ENCODE measurements at regions of chr4 and their contacts with region 1.

Region 1: DNA sequence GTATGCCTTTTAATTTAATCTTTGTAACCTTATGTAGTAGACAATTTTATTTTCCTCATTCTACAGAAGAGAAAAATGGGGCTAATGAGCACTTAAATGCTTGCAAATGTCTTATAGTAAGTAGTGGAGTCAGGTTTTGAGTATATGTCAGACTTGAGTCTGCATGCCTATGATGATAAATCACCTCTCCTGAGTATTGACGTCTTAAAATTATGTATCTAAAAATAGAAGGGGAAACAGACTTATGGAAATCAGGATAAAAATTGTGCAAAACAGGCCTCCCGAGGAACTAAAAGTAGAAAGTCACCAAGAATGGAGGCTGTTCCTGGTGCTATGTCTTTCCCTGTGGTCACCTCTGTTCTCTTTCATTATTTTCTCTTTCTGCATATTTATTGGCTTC is 92.7 kb downstream of the STIM2 start:
- DNase-seq: no peak
- ATAC-seq: no peak
- H3K4me3 ChIP-seq: no peak overlapping the region
- H3K4me3 Mint-ChIP-seq: peak overlapping the region in 3 of 10 donors; percentile 5 to 63 (median 32)
- H3K27ac ChIP-seq: no peak overlapping the region
- H3K27ac Mint-ChIP-seq: peak overlapping the region in 1 of 9 donors; percentile 9
- H3K4me1 ChIP-seq: peaks cover 0 to 6% of the 10 kb centered on the region in 2 donors
- H3K4me1 Mint-ChIP-seq: peaks cover 9 to 75% (median 57%) of the 10 kb centered on the region in 7 donors
- H3K27me3 ChIP-seq: no peaks in the 10 kb centered on the region
- H3K27me3 Mint-ChIP-seq: no peaks in the 10 kb centered on the region

Region 2: GRCh38 chr4:26916195-26916594 is 37.2 kb before region 1 on chr4:
- CTCF ChIA-PET with region 1: no interaction called
- POLR2A ChIA-PET with region 1: no interaction called
- intact Hi-C with region 1: loop called in 1 of 2 experiments (anchors 5 kb)
- DNase-seq: peak in 3 of 9 donors; percentile 5 to 18 (median 6)
- ATAC-seq: no peak
- H3K4me3 ChIP-seq: no peak overlapping the region
- H3K4me3 Mint-ChIP-seq: peak overlapping the region in 3 of 10 donors; percentile 1 to 38 (median 1)
- H3K27ac ChIP-seq: no peak overlapping the region
- H3K27ac Mint-ChIP-seq: peak overlapping the region in 7 of 9 donors; percentile 3 to 78 (median 57)
- H3K4me1 ChIP-seq: peaks cover 13 to 42% of the 10 kb centered on the region in 2 donors
- H3K4me1 Mint-ChIP-seq: peaks cover 35 to 86% (median 63%) of the 10 kb centered on the region in 7 donors
- H3K27me3 ChIP-seq: no peaks in the 10 kb centered on the region
- H3K27me3 Mint-ChIP-seq: no peaks in the 10 kb centered on the region

Region 3: GRCh38 chr4:26936284-26937065 is 16.9 kb before region 1 on chr4:
- CTCF ChIA-PET with region 1: interaction called, 3 read pairs
- POLR2A ChIA-PET with region 1: interaction called, 3 read pairs
- intact Hi-C with region 1: loop called in 1 of 2 experiments (anchors 2 kb)
- DNase-seq: no peak
- ATAC-seq: peak; percentile 54
- H3K4me3 ChIP-seq: no peak overlapping the region
- H3K4me3 Mint-ChIP-seq: peak overlapping the region in 6 of 10 donors; percentile 4 to 34 (median 12)
- H3K27ac ChIP-seq: no peak overlapping the region
- H3K27ac Mint-ChIP-seq: peak overlapping the region in 7 of 9 donors; percentile 3 to 72 (median 54)
- H3K4me1 ChIP-seq: peaks cover 13 to 17% of the 10 kb centered on the region in 2 donors
- H3K4me1 Mint-ChIP-seq: peaks cover 32 to 88% (median 81%) of the 10 kb centered on the region in 7 donors
- H3K27me3 ChIP-seq: no peaks in the 10 kb centered on the region
- H3K27me3 Mint-ChIP-seq: no peaks in the 10 kb centered on the region

Region 4: DNA sequence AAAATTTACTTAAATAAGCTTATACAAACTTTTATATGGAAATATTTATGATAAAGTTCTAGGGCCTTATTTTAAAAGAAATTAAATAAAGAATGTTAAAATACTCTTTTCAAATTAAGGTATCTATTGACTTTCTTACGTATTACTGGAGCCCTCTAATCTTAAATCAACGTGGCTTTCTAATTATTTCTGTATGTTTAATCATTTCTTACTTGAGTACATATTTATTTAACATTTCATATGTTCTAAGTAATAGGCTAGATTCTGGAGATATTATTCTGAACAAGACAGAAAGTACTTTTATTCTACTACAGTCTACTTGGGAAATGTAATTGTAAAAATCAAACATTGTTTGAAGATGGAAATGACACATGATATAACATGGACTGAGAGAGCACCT is 1782.2 kb after region 1 on chr4:
- CTCF ChIA-PET with region 1: no interaction called
- POLR2A ChIA-PET with region 1: no interaction called
- intact Hi-C with region 1: no loop called
- DNase-seq: no peak
- ATAC-seq: no peak
- H3K4me3 ChIP-seq: no peak overlapping the region
- H3K4me3 Mint-ChIP-seq: no peak overlapping the region
- H3K27ac ChIP-seq: no peak overlapping the region
- H3K27ac Mint-ChIP-seq: no peak overlapping the region
- H3K4me1 ChIP-seq: no peaks in the 10 kb centered on the region
- H3K4me1 Mint-ChIP-seq: no peaks in the 10 kb centered on the region
- H3K27me3 ChIP-seq: no peaks in the 10 kb centered on the region
- H3K27me3 Mint-ChIP-seq: no peaks in the 10 kb centered on the region

Measured in naive thymus-derived CD4-positive, alpha-beta T cell (primary cell).